Mammary epithelial cell (primary cell): ENCODE measurements at regions of chr5 and their contacts with region 1.

Region 1: DNA sequence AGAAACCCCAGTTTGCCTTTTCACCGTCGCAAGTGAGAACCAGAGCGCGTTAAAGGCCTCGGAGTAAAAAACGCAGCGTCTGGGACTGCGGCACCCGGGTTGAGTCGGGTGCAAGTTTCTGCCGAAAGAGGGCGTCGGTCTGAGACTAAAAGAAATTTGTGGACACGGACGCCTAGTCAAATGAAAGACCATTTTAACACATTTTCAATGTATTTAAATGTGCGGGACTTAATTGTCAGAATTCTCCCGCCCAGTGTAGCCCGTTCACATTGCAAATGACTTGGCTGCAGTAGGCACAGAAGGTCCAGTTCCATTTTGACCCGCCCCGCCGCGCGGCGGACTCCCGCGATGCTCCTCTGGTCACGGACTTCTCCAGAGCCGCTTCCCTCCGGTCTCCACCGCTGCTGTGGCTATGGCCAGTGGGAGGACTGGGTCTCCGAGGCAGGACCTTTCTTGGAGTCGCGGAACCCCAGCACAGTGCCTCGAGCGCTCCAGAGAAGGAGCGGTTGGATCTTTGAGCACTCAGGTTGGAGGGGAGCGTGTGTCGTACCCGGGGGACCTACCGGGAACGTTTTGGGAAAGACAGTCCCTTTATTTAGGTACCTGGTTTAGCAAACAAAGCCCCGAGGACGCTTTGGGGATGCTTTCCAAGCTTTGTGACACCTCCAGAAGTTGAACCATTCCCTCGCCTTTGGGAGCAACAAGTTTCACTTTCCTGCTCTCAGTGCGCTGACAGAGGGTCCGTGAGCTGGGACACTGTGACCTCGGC is 1.2 kb upstream of the NPR3 start:
- DNase-seq: peak; percentile 62
- H3K4me3 ChIP-seq: peak overlapping the region; percentile 38 to 54 (median 52)
- H3K27ac ChIP-seq: no peak overlapping the region
- H3K4me1 ChIP-seq: peaks cover 31% of the 10 kb centered on the region
- H3K27me3 ChIP-seq: peaks cover 27% of the 10 kb centered on the region
- CTCF ChIP-seq: peak; percentile 49 to 71

Region 2: DNA sequence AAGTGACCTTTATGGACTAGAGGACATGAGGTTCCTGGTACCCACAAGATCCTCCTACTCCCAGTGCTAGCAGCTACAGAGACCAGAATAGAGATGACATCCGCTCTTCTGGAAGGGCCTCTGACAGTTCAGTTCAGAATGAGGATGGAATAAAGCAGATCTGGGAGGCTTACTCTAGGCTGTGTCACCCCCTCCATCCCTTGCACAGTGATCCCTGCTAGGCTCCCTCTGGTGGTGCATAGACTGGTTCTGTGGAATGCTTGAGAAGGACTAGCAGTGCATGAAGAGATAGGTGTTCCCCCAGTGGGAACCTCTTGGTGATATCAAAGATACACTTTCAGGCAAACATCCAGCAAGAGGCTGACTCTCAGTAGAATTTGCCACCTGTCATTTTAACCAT is 84.1 kb after region 1 on chr5:
- CTCF ChIA-PET with region 1: no interaction called
- dilution Hi-C with region 1: no loop called
- in situ Hi-C with region 1: no loop called
- intact Hi-C with region 1: loop called (anchors 5 kb)
- DNase-seq: no peak
- H3K4me3 ChIP-seq: no peak overlapping the region
- H3K27ac ChIP-seq: no peak overlapping the region
- H3K4me1 ChIP-seq: no peaks in the 10 kb centered on the region
- H3K27me3 ChIP-seq: peaks cover 3% of the 10 kb centered on the region
- CTCF ChIP-seq: peak in 1 of 2 donors; percentile 30

Region 3: DNA sequence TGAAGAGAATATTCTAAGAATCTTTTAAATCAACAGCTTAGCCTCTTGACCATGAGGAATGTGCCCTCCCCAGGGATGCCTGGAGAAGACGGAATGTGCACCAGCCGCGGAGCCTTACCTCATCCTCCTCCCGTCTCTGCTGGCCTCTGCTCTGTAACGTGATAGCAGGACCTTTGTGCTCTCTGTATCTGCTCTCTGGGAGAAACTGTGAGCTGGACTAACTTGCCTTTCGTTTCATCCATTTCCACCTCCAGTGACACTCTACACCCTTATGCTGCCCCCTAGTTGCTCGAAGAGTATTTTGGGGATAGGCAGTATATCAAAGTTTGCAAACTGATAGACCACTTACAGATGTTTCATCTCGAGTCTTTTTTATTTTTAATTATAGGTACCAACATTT is 142.6 kb after region 1 on chr5:
- CTCF ChIA-PET with region 1: interaction called, 3 read pairs
- dilution Hi-C with region 1: no loop called
- in situ Hi-C with region 1: no loop called
- intact Hi-C with region 1: loop called (anchors 1 kb)
- DNase-seq: no peak
- H3K4me3 ChIP-seq: no peak overlapping the region
- H3K27ac ChIP-seq: no peak overlapping the region
- H3K4me1 ChIP-seq: no peaks in the 10 kb centered on the region
- H3K27me3 ChIP-seq: peaks cover 2% of the 10 kb centered on the region
- CTCF ChIP-seq: peak in 1 of 2 donors; percentile 17

Region 4: GRCh38 chr5:33299621-33300208 is 589.8 kb after region 1 on chr5:
- CTCF ChIA-PET with region 1: no interaction called
- dilution Hi-C with region 1: no loop called
- in situ Hi-C with region 1: no loop called
- intact Hi-C with region 1: loop called (anchors 1 kb)
- DNase-seq: peak; percentile 90
- H3K4me3 ChIP-seq: peak overlapping the region in 1 of 3 experiments; percentile 3
- H3K27ac ChIP-seq: peak overlapping the region; percentile 79
- H3K4me1 ChIP-seq: peaks cover 21% of the 10 kb centered on the region
- H3K27me3 ChIP-seq: no peaks in the 10 kb centered on the region
- CTCF ChIP-seq: peak; percentile 43 to 56

Region 5: DNA sequence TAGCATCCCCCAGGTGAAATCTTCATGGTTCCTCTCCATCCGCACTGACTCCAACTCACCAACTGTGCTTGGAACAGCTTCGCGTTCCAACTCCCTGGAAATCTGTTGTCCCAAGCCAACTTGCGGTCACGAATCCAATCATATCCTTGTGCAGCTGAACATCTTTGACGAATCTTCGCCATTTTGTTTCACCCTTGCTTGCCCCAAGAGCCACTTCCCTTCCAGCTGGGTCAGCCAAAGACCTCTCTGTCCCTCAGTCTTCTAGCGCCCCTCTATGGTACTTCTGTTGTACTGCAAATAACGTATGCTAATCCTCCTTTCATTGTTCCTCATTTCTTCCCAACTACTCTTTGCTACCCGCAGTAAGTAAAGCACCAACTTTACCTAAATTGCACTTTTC is 669.8 kb after region 1 on chr5:
- CTCF ChIA-PET with region 1: no interaction called
- dilution Hi-C with region 1: no loop called
- in situ Hi-C with region 1: no loop called
- intact Hi-C with region 1: loop called (anchors 5 kb)
- DNase-seq: peak; percentile 20
- H3K4me3 ChIP-seq: no peak overlapping the region
- H3K27ac ChIP-seq: no peak overlapping the region
- H3K4me1 ChIP-seq: peaks cover 6% of the 10 kb centered on the region
- H3K27me3 ChIP-seq: no peaks in the 10 kb centered on the region
- CTCF ChIP-seq: peak; percentile 50 to 51

Region 6: DNA sequence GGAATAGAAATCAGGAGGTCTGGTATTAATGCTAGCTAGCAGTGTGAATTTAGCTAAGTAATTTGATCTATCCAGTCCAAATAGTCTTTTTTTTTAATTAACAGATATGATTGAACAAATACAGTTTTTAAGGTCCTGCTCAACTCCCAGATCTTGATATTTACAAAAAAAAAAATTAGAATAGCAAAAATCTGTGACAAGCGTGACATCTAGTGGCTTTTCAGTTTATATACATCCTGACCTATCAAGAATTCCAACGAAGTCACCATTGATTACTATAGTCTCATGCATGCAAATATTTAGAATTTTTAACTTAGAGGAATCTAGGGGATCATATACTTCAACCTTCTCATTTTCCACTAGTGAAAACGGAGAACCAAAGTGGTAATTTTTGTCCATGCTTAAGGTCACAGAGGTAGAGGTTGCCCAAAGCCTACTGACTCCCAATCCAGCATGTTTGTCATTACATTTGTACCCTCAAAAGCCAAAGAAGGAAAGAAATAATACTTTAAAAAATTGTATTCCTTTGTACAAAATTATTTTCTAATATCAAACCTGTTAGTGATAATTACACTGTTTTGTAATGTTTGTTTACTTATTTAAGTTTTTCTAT is 713.2 kb after region 1 on chr5:
- CTCF ChIA-PET with region 1: no interaction called
- dilution Hi-C with region 1: no loop called
- in situ Hi-C with region 1: loop called in 1 of 2 experiments (anchors 10 kb)
- intact Hi-C with region 1: loop called (anchors 2 kb)
- DNase-seq: no peak
- H3K4me3 ChIP-seq: no peak overlapping the region
- H3K27ac ChIP-seq: no peak overlapping the region
- H3K4me1 ChIP-seq: no peaks in the 10 kb centered on the region
- H3K27me3 ChIP-seq: no peaks in the 10 kb centered on the region
- CTCF ChIP-seq: peak; percentile 27 to 51